ENCODE measurements at regions of chr3 and their contacts with region 1.

Region 1: DNA sequence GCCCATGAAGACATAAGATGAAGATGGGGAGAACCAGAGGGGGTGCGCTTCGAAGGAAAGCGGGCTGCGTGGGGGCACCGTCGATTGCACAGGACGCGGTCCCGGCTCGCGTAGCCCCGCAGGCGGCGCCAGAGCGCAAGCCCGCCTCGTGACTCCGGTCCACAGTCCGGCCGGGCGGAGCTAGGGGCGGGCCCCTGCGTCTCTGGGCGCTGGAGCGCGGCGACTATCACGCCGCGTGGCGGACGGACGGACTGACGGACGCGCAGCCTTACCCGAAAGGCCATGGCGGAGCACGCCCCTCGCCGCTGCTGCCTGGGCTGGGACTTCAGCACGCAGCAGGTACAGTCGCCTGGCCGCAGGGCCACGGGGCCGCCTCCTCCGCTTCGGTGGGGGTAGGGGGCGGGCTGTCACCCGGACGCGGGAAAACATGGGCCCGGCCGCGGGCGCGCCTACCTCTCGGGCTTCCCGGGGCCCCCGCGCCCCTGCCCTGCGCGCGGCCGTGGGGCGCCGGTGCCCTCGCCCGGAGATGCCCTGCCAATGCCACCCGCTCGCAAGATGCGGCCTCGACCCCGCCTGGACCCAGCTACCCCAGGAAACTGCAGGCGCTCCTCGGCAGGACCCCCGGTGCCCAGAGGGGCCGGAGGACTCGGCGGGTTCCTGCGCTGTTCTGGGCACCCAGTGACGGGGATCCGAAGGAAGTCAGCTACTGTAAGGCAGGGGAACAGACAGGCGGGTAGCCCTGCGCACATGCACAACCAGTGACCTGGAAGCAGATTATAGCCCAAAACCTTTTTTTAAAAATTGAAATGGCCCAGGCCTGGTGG is at the start of gene XYLB:
- DNase-seq: peak; percentile 91
- H3K4me3 Mint-ChIP-seq: no peak within 1 kb of the TSS
- H3K27ac Mint-ChIP-seq: peak within 1 kb of the TSS; percentile 54
- H3K4me1 Mint-ChIP-seq: no peaks in the 10 kb centered on the region
- H3K27me3 Mint-ChIP-seq: no peaks in the 10 kb centered on the region
- CTCF ChIP-seq: peak; percentile 69
- total RNA-seq, gene XYLB: 11.1 and 12.2 TPM in 2 replicates

Region 2: GRCh38 chr3:38453075-38453912 is 106.5 kb after region 1 on chr3 and contains the start of gene ACVR2B:
- CTCF ChIA-PET with region 1: no interaction called
- intact Hi-C with region 1: loop called (anchors 10 kb)
- DNase-seq: peak; percentile 82
- H3K4me3 Mint-ChIP-seq: peak within 1 kb of the TSS; percentile 94
- H3K27ac Mint-ChIP-seq: peak within 1 kb of the TSS; percentile 70
- H3K4me1 Mint-ChIP-seq: peaks cover 13% of the 10 kb centered on the region
- H3K27me3 Mint-ChIP-seq: no peaks in the 10 kb centered on the region
- CTCF ChIP-seq: no peak
- total RNA-seq, gene ACVR2B: 5.2 and 6.2 TPM in 2 replicates

Region 3: GRCh38 chr3:38479431-38480092 is 132.8 kb after region 1 on chr3:
- CTCF ChIA-PET with region 1: interaction called, 12 read pairs
- intact Hi-C with region 1: loop called (anchors 5 kb)
- DNase-seq: peak; percentile 66
- H3K4me3 Mint-ChIP-seq: no peak overlapping the region
- H3K27ac Mint-ChIP-seq: no peak overlapping the region
- H3K4me1 Mint-ChIP-seq: no peaks in the 10 kb centered on the region
- H3K27me3 Mint-ChIP-seq: no peaks in the 10 kb centered on the region
- CTCF ChIP-seq: peak; percentile 46

Region 4: DNA sequence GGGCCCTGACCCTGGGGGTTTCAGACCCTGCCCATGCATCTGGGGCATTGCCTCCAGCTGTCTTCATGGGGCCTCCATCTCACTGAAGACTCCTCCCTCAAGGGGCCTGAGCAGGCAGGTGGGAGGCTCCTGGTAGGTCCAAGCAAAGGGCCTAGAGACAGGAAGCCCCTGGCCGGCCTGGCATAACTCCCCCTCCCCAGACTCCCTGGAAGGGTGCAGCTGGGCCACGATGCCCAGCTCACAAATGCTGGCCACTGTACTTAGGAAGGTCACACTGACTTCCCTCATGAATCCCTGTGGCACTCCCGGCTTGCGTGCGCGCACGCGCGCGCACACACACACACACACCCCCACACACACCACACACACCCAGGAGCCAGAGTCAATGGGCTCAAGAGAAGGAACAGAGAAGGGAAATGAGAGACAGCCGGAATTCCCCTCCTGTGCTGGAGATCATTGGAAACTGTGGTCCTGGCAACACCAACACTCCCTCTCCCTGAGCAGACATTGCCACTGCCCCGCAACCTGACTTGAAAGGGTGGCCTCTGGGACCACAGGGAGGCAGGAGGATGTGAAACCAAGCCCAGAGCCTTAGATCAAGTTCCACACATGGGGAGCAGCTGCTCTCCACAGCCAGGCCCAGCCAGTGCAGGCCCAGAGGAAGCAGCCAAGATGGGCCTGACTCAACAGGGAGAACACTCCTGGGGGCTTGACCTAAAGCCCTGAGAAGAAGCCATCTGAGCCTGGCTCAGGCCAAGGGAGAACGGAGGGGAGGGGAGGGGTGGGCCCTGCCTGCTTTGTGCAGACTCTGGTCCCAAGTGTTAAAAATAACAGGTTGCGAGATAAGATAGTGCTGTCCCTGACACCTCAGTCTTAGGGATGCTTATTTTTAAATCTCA is 233.0 kb after region 1 on chr3:
- CTCF ChIA-PET with region 1: no interaction called
- intact Hi-C with region 1: no loop called
- DNase-seq: no peak
- H3K4me3 Mint-ChIP-seq: no peak overlapping the region
- H3K27ac Mint-ChIP-seq: no peak overlapping the region
- H3K4me1 Mint-ChIP-seq: no peaks in the 10 kb centered on the region
- H3K27me3 Mint-ChIP-seq: peaks cover 41% of the 10 kb centered on the region
- CTCF ChIP-seq: no peak

Region 5: DNA sequence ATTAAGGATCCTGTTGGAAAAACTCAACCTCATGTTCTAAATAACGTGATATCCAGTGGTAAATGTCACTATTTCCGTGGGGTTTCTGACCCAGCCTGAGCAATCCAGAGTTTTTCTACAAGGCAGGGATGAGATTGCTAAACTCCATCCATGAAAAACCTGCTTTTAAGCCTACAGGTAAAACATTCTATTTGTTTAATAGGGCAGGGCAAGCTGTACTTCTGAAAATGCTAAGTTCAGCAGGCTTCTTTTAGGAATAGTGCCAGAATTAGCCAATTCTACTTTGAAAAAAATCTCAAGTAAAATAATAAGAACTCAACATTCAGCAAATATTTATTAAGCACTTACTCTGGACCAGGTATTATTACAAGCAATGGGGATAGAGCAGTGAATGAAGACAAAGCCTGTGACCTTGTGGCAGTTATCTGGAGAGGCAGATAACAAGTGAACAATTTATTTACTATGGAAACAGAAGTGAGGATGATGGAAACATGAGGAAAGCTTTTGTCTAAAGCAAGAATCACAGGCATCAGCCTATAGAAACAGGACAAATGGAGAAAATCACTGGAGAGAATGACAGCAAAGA is 1073.0 kb after region 1 on chr3:
- CTCF ChIA-PET with region 1: no interaction called
- intact Hi-C with region 1: no loop called
- DNase-seq: no peak
- H3K4me3 Mint-ChIP-seq: no peak overlapping the region
- H3K27ac Mint-ChIP-seq: no peak overlapping the region
- H3K4me1 Mint-ChIP-seq: peaks cover 9% of the 10 kb centered on the region
- H3K27me3 Mint-ChIP-seq: no peaks in the 10 kb centered on the region
- CTCF ChIP-seq: no peak

Measured in Calu3 (cell line).